Aorta (tissue), 5 donors: ENCODE measurements at regions of chr1 and their contacts with region 1.

Region 1: DNA sequence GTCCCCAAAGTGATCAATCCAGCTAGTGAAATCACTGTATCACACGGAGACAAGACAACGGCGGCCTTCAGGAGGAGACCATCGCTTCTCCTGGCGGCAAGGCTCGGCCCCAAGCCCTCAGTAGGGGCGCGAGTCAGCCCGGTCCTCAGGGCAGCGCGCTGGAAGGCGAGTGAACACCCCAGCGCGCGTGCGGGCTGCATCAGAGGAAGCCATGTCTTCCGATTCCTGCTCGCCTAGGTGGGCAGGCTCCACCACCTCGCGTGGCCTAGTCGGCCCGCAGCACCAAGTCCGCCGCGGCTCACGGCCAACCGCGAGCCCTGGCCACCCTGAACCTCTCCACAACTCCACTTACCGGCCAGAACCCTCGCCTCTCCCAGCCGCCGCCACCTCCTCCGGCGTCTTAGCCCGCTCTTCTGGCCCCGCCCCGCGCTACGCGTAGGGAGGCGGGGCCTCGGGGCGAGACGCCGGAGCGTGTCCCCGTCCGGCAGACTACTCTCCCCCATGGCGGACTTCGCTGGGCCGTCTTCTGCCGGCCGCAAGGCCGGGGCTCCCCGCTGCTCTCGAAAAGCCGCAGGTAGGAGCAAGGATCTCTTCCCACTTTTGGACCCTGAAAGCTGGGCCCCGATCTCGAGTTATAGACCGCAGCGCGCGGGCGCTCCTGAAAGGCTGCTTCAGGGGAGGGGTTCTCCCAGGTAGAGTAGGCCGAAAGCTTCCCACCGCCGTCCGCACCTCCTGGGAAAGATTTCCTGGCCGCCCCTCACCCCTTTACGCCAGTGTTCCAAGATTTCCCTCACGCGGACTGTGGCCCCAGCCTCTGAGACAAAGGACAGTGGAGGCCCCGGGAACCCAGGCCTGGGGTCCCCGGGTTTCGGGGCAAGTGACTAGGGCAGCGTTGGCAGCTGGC is at the starts of genes GLMN and RPAP2:
- DNase-seq: peak; percentile 84 to 92
- ATAC-seq: peak; percentile 100
- H3K4me3 ChIP-seq: peak within 1 kb of the TSS; percentile 51 to 90
- H3K27ac ChIP-seq: peak within 1 kb of the TSS in 1 of 2 donors; percentile 93
- H3K4me1 ChIP-seq: no peaks in the 10 kb centered on the region
- H3K27me3 ChIP-seq: no peaks in the 10 kb centered on the region
- total RNA-seq, gene GLMN: 7.6 to 9.9 TPM
- total RNA-seq, gene RPAP2: 31.2 to 31.3 TPM

Region 2: DNA sequence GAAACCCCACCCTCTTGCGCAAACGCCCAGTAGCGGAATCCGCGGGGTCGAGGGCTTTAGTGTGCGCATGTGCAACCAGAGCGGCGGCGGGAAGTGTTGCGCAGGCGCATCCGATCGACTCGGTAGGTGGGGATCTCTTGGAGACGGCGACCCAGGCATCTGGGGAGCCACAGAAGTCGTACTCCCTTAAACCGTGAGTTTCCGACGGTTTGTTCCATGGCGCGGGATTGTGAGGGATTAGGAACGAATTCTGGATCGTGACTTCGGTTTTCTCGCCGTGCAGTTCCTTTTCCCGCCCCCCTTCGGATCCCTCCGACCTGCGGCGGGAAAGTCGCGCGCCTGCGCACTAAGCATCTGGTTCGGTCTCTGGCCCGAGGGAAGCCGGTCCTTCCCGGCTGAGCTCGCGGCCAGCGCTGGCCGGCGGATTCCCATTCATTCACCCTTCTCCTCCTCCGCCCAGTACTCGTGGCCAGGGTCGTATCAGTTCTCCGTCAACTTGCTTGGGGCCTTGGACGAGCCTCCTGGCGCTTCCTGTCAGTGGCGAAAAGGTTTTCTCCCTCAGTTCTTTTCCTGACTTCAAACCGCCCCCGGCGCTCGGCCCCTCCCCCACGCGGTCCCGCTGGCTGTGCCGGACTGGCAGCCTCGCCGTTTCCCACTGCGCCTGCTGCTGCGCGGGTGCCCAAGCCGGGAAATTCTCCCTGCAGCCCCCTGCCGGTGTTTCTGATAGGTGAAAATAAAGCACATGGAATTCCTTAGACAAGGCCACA is 797.9 kb before region 1 on chr1 and contains the start of gene CDC7:
- intact Hi-C with region 1: loop called in 1 of 2 experiments (anchors 5 kb)
- DNase-seq: peak; percentile 95 to 97
- ATAC-seq: peak; percentile 98
- H3K4me3 ChIP-seq: peak within 1 kb of the TSS; percentile 59 to 85
- H3K27ac ChIP-seq: peak within 1 kb of the TSS in 1 of 2 donors; percentile 73
- H3K4me1 ChIP-seq: no peaks in the 10 kb centered on the region
- H3K27me3 ChIP-seq: no peaks in the 10 kb centered on the region
- total RNA-seq, gene CDC7: 1.6 to 3.9 TPM

Region 3: GRCh38 chr1:91997607-91998195 is 301.1 kb before region 1 on chr1:
- intact Hi-C with region 1: loop called in 1 of 2 experiments (anchors 10 kb)
- DNase-seq: no peak
- ATAC-seq: no peak
- H3K4me3 ChIP-seq: no peak overlapping the region
- H3K27ac ChIP-seq: no peak overlapping the region
- H3K4me1 ChIP-seq: no peaks in the 10 kb centered on the region
- H3K27me3 ChIP-seq: no peaks in the 10 kb centered on the region

Region 4: DNA sequence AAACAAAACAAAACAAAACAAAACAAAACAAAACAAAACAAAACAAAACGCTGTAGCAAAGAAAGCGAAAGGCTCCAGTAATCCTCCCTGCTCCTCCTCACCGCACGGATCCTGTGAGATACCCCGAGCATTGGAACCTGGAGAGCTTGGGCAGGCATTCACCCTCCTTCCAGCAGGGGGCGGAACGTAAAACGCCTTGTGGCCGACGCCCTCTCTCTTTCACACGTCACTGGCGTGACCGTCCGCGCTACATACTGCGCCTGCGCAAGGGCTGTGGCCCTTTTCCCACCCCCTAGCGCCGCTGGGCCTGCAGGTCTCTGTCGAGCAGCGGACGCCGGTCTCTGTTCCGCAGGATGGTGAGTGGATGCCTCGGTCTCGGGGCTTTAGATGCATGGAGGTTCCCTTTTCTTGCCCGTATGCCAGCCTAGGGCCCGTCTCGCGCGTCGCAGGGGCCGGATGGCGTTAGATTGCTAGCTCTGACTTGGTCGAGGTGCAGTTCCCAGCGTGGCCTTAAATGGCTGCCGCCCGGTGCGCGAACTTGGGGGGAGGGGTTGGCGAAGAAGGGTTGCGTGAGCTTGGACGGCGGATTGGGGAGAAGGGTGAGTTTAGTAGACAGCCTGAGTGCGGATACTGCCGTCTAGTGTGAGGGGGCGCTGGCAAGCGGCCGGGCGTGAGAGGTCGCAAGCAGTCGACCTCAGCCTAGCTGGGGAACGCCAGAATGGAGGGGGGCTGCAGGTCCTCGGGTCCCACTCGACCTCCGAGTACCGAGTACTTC is 533.1 kb after region 1 on chr1 and contains the start of gene RPL5:
- intact Hi-C with region 1: loop called in 1 of 2 experiments (anchors 10 kb)
- DNase-seq: peak; percentile 97 to 99
- ATAC-seq: peak; percentile 100
- H3K4me3 ChIP-seq: peak within 1 kb of the TSS; percentile 71 to 94
- H3K27ac ChIP-seq: peak within 1 kb of the TSS; percentile 78 to 83
- H3K4me1 ChIP-seq: peaks cover 0 to 2% of the 10 kb centered on the region in 2 donors
- H3K27me3 ChIP-seq: no peaks in the 10 kb centered on the region
- total RNA-seq, gene RPL5: 778 to 824 TPM